A673 (cell line): ENCODE measurements at regions of chr2 and their contacts with region 1.

Region 1: GRCh38 chr2:49770919-49771318 is 616.6 kb upstream of the FSHR start:
- DNase-seq: peak; percentile 43
- H3K4me3 ChIP-seq: no peak overlapping the region
- H3K27ac ChIP-seq: no peak overlapping the region
- H3K4me1 ChIP-seq: no peaks in the 10 kb centered on the region
- H3K27me3 ChIP-seq: no peaks in the 10 kb centered on the region
- CTCF ChIP-seq: peak; percentile 56

Region 2: GRCh38 chr2:50438259-50438658 is 667.3 kb after region 1 on chr2:
- CTCF ChIA-PET with region 1: interaction called, 14 read pairs
- POLR2A ChIA-PET with region 1: no interaction called
- intact Hi-C with region 1: no loop called
- DNase-seq: no peak
- H3K4me3 ChIP-seq: no peak overlapping the region
- H3K27ac ChIP-seq: no peak overlapping the region
- H3K4me1 ChIP-seq: no peaks in the 10 kb centered on the region
- H3K27me3 ChIP-seq: no peaks in the 10 kb centered on the region
- CTCF ChIP-seq: no peak